ENCODE measurements at regions of chr3 and their contacts with region 1.

Region 1: GRCh38 chr3:183635431-183636220 is at the start of gene KLHL24:
- DNase-seq: peak; percentile 75 to 90 (median 88)
- ATAC-seq: peak; percentile 83
- H3K4me3 ChIP-seq: peak within 1 kb of the TSS; percentile 75
- H3K4me3 Mint-ChIP-seq: peak within 1 kb of the TSS; percentile 92 to 96 (median 94)
- H3K27ac ChIP-seq: peak within 1 kb of the TSS; percentile 91
- H3K27ac Mint-ChIP-seq: peak within 1 kb of the TSS; percentile 87 to 98 (median 95)
- H3K4me1 ChIP-seq: peaks cover 15 to 23% of the 10 kb centered on the region in 2 donors
- H3K4me1 Mint-ChIP-seq: peaks cover 18 to 44% (median 30%) of the 10 kb centered on the region in 7 donors
- H3K27me3 ChIP-seq: no peaks in the 10 kb centered on the region
- H3K27me3 Mint-ChIP-seq: no peaks in the 10 kb centered on the region
- total RNA-seq, gene KLHL24: 25.3 to 161 (median 129) TPM

Region 2: DNA sequence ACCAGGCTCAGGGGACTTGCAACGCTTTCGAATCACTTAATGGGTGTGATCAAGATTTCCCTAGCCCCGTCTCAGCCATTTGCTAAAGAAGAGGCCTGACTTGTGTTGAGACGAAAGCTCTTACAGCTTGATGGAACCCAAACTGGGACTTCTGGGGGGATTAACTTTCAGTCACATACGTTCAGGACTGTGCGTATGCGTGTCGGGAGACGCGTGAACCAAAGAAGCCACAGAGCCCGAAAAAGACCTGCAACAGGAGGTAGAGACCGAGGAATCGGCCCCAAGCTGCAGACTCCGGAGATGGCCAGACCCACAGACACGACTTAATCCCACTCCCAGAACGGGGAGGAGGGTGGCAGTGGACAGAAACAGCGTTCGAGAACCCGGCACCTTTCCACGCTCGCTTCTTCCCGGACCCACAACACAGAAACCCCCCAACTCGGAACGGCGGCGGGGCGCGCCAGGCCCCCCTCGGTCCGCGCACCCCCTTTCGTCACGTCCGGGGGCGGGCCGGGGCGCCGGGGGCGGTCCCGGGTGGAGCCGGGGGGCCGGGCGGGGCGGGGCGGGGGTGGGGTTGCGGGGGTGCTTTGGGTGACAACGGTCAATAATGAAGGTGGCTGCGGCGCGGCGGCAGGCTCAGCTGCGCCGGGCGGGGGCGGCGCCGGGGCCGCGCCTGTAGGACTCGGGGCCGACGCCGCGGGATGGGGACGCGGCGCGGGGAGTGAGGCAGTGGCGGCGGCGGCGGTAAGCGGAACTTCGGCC is 842.5 kb before region 1 on chr3 and contains the start of gene ATP11B:
- CTCF ChIA-PET with region 1: no interaction called
- POLR2A ChIA-PET with region 1: interaction called, 6 read pairs
- intact Hi-C with region 1: loop called (anchors 1 to 5 kb)
- DNase-seq: peak; percentile 72 to 90 (median 83)
- ATAC-seq: peak; percentile 92
- H3K4me3 ChIP-seq: peak within 1 kb of the TSS; percentile 98
- H3K4me3 Mint-ChIP-seq: peak within 1 kb of the TSS; percentile 97 to 100 (median 100)
- H3K27ac ChIP-seq: peak within 1 kb of the TSS; percentile 97
- H3K27ac Mint-ChIP-seq: peak within 1 kb of the TSS; percentile 96 to 100 (median 100)
- H3K4me1 ChIP-seq: peaks cover 21 to 22% of the 10 kb centered on the region in 2 donors
- H3K4me1 Mint-ChIP-seq: peaks cover 20 to 43% (median 28%) of the 10 kb centered on the region in 7 donors
- H3K27me3 ChIP-seq: no peaks in the 10 kb centered on the region
- H3K27me3 Mint-ChIP-seq: no peaks in the 10 kb centered on the region
- total RNA-seq, gene ATP11B: 111 to 136 (median 114) TPM

Region 3: GRCh38 chr3:183447206-183448001 is 188.2 kb before region 1 on chr3:
- CTCF ChIA-PET with region 1: no interaction called
- POLR2A ChIA-PET with region 1: interaction called, 5 read pairs
- intact Hi-C with region 1: loop called (anchors 1 to 2 kb)
- DNase-seq: peak; percentile 39 to 74 (median 51)
- ATAC-seq: peak; percentile 87
- H3K4me3 ChIP-seq: peak overlapping the region; percentile 80
- H3K4me3 Mint-ChIP-seq: peak overlapping the region; percentile 88 to 99 (median 93)
- H3K27ac ChIP-seq: peak overlapping the region; percentile 47
- H3K27ac Mint-ChIP-seq: peak overlapping the region; percentile 60 to 93 (median 81)
- H3K4me1 ChIP-seq: peaks cover 5 to 12% of the 10 kb centered on the region in 2 donors
- H3K4me1 Mint-ChIP-seq: peaks cover 13 to 26% (median 17%) of the 10 kb centered on the region in 7 donors
- H3K27me3 ChIP-seq: no peaks in the 10 kb centered on the region
- H3K27me3 Mint-ChIP-seq: peaks cover 0 to 20% (median 0%) of the 10 kb centered on the region in 5 donors

Region 4: DNA sequence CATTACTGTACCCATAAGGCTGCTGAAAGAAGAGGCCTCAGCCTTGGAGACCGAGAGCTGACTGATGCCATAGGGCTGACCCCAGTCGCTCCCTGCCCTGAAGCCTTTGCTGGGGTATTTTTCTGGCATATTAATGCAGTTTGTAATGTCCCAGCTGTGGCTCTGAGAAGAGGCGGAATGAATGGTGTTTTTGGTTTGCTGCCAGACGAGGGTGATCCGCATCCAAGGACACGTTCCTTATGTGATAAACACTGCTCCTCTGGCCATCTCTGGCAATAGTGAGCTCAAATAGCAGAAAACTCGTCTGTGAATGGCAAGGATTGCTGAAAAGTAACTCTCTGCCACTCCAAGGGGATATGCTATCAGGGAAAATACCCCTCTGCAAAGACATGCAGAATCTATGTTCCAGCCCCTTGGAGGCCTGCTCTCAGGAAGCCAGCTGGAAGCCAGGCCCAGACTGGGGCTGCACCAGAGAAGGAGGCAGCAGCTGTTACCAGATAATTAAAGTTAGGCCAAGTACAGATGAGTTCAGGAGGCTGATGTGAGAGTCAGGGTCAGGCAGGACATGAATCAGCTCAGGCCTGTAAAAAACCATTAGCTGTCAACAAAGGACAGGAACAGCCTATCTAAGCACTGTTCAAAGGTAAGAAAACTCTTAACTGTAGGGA is 51.2 kb before region 1 on chr3:
- CTCF ChIA-PET with region 1: no interaction called
- POLR2A ChIA-PET with region 1: interaction called, 22 read pairs
- intact Hi-C with region 1: loop called in 1 of 2 experiments (anchors 2 kb)
- DNase-seq: no peak
- ATAC-seq: no peak
- H3K4me3 ChIP-seq: no peak overlapping the region
- H3K4me3 Mint-ChIP-seq: peak overlapping the region in 1 of 10 donors; percentile 24
- H3K27ac ChIP-seq: no peak overlapping the region
- H3K27ac Mint-ChIP-seq: peak overlapping the region in 8 of 9 donors; percentile 37 to 89 (median 70)
- H3K4me1 ChIP-seq: peaks cover 11 to 33% of the 10 kb centered on the region in 2 donors
- H3K4me1 Mint-ChIP-seq: peaks cover 31 to 72% (median 56%) of the 10 kb centered on the region in 7 donors
- H3K27me3 ChIP-seq: no peaks in the 10 kb centered on the region
- H3K27me3 Mint-ChIP-seq: peaks cover 0 to 3% (median 0%) of the 10 kb centered on the region in 5 donors

Region 5: DNA sequence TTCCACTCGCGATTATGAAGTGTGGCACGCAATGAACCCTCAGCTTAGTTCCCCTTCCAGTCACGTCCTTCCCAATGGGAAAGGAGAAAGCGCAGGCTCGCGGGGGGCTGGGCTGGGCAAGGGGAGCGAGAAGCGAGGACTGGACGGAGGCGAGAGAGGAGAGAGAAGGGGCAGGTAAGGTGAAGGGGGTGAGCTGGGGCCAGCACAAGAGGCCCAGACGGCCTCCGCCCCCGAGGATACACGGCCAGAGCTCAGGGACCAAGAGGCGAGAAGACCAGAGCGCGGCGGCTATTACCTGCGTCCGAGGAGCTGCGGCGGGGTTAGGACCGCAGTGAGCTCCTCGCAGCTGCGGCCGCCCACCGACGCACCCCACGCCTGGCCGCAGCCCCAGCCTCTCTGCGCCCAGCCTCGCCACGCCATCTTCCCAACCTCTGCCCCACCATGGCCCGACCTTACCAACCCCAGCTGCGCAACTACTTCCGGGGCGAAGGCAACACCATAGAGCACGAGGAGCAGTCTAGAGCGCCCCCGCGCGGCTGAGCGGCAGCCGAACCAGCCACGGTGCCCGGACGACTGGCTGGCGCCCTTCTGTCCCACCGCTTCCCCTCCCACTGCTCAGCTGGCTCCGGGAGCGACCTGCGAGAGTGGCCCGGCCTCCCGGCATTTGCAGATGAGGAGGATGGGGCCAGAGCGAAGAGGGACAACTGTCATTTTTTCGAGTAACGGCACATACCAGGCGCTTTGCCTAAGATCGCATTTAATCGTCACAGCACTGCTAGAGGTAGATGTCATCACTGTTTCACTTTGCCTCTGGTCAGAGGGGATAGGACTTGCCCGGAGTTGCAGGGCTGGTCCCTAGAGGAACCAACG is 249.0 kb after region 1 on chr3 and contains the start of gene PARL:
- CTCF ChIA-PET with region 1: no interaction called
- POLR2A ChIA-PET with region 1: no interaction called
- intact Hi-C with region 1: loop called in 1 of 2 experiments (anchors 10 kb)
- DNase-seq: peak; percentile 88 to 99 (median 95)
- ATAC-seq: peak; percentile 100
- H3K4me3 ChIP-seq: peak within 1 kb of the TSS; percentile 85
- H3K4me3 Mint-ChIP-seq: peak within 1 kb of the TSS; percentile 89 to 98 (median 96)
- H3K27ac ChIP-seq: peak within 1 kb of the TSS; percentile 77
- H3K27ac Mint-ChIP-seq: peak within 1 kb of the TSS; percentile 86 to 96 (median 93)
- H3K4me1 ChIP-seq: peaks cover 15% of the 10 kb centered on the region in 2 donors
- H3K4me1 Mint-ChIP-seq: peaks cover 15 to 53% (median 41%) of the 10 kb centered on the region in 7 donors
- H3K27me3 ChIP-seq: no peaks in the 10 kb centered on the region
- H3K27me3 Mint-ChIP-seq: peaks cover 0 to 3% (median 0%) of the 10 kb centered on the region in 5 donors
- total RNA-seq, gene PARL: 41.6 to 50.4 (median 47.1) TPM

Region 6: DNA sequence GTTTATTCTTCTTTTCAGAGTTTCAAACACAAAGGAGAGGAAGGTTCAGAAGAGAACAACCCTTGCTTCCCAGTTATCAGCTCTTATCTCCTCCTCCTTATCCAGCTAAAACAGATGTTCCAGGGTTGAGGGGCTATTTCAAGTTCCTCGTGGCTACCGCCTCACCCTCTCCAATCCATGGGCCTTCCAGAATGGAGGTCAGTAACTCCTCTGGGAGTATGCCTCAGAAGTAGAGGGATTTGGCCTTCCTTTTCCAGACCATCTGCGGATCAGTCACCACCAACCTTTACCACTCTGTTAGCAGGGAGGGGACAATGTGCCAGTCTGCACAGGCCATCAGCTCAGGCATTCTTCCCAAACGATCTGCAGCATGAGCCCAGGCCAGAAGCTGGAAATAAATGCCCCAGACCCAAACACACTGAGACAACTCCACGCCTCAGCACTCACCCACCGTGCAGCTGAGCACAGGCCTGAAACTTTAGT is 432.0 kb after region 1 on chr3:
- CTCF ChIA-PET with region 1: no interaction called
- POLR2A ChIA-PET with region 1: no interaction called
- intact Hi-C with region 1: no loop called
- DNase-seq: no peak
- ATAC-seq: no peak
- H3K4me3 ChIP-seq: no peak overlapping the region
- H3K4me3 Mint-ChIP-seq: no peak overlapping the region
- H3K27ac ChIP-seq: no peak overlapping the region
- H3K27ac Mint-ChIP-seq: no peak overlapping the region
- H3K4me1 ChIP-seq: no peaks in the 10 kb centered on the region
- H3K4me1 Mint-ChIP-seq: peaks cover 0 to 2% (median 0%) of the 10 kb centered on the region in 7 donors
- H3K27me3 ChIP-seq: no peaks in the 10 kb centered on the region
- H3K27me3 Mint-ChIP-seq: peaks cover 0 to 15% (median 9%) of the 10 kb centered on the region in 5 donors

Region 7: DNA sequence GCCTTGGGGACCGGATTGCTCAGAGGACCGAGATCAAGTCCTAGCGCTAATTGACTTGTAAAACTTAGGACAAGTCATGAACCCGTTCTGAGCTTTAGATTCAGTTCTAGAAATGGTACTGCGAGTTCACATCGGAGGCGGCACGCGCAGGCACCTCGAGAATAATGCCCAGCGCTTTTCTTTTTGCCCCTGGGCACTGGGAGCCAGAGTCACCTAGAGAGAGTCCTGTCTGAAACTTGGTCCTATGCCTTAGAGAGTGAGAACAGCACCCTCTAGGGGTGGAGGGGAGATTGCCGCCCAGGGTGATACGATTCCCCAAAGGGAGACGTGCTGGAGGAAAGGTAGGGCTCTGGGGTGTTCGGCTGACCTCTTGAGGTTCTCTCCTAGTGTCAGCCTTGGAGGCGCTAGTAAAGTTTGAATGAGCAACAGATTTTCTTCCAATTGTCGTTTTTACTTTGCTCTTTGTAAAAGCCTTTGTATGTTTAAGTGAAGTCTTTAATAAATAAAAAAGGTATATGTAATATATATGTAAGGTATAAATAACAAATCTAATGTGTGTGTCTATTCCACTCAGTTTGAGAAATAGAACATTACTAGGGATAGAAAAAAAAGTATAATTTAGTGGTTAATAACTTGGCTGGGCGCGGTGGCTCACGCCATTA is 614.7 kb after region 1 on chr3:
- CTCF ChIA-PET with region 1: no interaction called
- POLR2A ChIA-PET with region 1: no interaction called
- intact Hi-C with region 1: loop called in 1 of 2 experiments (anchors 1 kb)
- DNase-seq: peak; percentile 70 to 87 (median 83)
- ATAC-seq: peak; percentile 77
- H3K4me3 ChIP-seq: peak overlapping the region; percentile 100
- H3K4me3 Mint-ChIP-seq: peak overlapping the region; percentile 86 to 100 (median 96)
- H3K27ac ChIP-seq: peak overlapping the region; percentile 78
- H3K27ac Mint-ChIP-seq: peak overlapping the region in 8 of 9 donors; percentile 69 to 98 (median 96)
- H3K4me1 ChIP-seq: peaks cover 5 to 12% of the 10 kb centered on the region in 2 donors
- H3K4me1 Mint-ChIP-seq: peaks cover 5 to 22% (median 16%) of the 10 kb centered on the region in 7 donors
- H3K27me3 ChIP-seq: no peaks in the 10 kb centered on the region
- H3K27me3 Mint-ChIP-seq: no peaks in the 10 kb centered on the region

Region 8: DNA sequence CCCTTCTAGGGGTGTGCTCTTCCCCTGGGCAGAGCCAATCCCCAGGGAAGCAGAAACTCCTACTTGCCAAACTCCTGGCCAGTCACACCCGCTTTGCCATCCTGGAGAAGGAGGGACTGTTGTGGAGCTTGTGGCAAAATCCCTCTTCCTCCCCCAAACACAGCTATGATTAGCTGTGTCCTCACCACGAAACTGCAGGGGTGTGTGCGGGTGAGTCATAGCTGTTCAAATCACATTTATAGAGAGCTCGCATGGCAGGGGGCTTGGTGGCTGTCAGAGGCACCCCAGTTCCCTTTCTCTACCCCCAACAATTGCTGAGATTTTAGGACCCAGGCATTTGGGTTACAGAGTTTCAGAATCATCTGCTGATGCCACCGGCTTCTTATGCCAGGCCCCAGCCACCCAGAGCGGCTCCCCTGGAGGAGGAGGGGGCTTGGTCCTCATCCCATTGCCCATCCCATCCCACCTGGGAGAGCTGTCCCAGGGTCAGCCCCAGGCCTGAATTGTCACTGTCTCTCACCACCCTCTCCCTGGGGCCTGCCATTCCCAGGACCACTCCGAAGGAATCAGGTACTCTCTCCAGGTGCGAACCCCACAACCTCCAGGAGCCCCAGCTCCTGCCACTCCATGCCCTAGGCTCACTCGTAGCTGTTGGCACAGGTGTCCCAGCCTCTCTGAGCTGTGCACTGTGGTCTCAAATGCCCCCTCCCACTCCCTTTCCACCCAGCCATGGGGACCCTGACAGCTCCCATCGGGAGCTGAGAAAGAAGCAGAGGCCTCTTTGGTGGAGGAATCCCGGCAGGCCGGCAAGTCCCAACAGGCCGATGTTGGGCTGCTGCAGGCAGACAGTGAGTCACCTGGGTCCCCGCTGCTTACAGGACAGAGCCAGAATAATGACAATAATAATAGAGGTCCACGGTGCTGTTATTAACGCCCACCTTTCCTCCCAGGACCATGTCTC is 1105.2 kb after region 1 on chr3:
- CTCF ChIA-PET with region 1: no interaction called
- POLR2A ChIA-PET with region 1: no interaction called
- intact Hi-C with region 1: no loop called
- DNase-seq: no peak
- ATAC-seq: no peak
- H3K4me3 ChIP-seq: no peak overlapping the region
- H3K4me3 Mint-ChIP-seq: no peak overlapping the region
- H3K27ac ChIP-seq: no peak overlapping the region
- H3K27ac Mint-ChIP-seq: no peak overlapping the region
- H3K4me1 ChIP-seq: no peaks in the 10 kb centered on the region
- H3K4me1 Mint-ChIP-seq: no peaks in the 10 kb centered on the region
- H3K27me3 ChIP-seq: no peaks in the 10 kb centered on the region
- H3K27me3 Mint-ChIP-seq: peaks cover 0 to 13% (median 4%) of the 10 kb centered on the region in 5 donors